ENCODE measurements at regions of chr10 and their contacts with region 1.

Region 1: DNA sequence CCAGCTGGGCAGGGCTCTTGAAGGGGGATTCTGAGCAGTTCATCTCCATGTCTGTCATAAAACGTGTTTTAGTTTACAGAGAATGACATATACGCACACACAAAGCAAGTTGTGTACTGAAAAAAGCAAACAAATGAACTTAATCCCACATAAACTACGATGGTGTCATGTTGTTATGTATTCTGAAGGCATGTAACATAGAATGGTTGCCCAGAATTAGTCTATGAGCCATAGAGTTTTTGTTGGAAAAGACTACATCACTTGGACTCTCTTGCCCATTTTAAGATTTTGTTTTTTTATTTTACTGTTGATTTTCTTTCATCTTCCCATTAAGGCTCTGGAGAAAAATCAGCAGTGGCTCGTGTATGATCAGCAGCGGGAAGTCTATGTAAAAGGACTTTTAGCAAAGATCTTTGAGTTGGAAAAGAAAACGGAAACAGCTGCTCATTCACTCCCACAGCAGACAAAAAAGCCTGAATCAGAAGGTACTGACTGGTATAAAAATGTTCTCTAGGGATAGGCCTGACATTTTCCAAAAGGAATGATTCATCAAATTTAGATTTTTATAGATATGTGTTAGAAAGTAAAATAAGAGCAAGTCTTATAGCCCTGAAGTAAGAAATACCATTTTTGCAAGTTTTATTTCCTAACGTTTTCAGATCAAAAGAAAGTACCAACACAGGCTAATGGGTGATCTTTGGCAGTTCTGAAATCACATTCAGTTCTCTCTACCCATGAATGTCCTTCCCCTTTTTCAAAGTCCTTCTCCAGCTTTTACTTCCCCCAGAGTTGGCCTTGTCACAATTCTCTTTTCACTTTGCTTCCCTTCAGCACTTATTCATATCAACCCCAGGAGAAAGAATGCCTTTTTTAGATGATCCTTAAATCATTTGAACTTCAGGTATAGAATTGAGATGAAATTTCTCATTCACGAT is 18.9 kb downstream of the CEP55 start:
- DNase-seq: no peak
- ATAC-seq: no peak
- H3K4me3 ChIP-seq: no peak overlapping the region
- H3K27ac ChIP-seq: no peak overlapping the region
- H3K4me1 ChIP-seq: peaks cover 6% of the 10 kb centered on the region; the same call in 1 of the 2 replicates
- H3K27me3 ChIP-seq: no peaks in the 10 kb centered on the region
- CTCF ChIP-seq: no peak

Region 2: GRCh38 chr10:92965314-92965713 is 550.0 kb before region 1 on chr10:
- CTCF ChIA-PET with region 1: no interaction called
- POLR2A ChIA-PET with region 1: interaction called, 18 read pairs
- intact Hi-C with region 1: no loop called
- DNase-seq: peak; percentile 68
- ATAC-seq: 0 out of 2 replicates have a peak, but pooled peaks have one; percentile 27
- H3K4me3 ChIP-seq: peak overlapping the region; percentile 31; the same call in 1 of the 2 replicates
- H3K27ac ChIP-seq: no peak overlapping the region
- H3K4me1 ChIP-seq: peaks cover 11% of the 10 kb centered on the region
- H3K27me3 ChIP-seq: no peaks in the 10 kb centered on the region
- CTCF ChIP-seq: peak; percentile 77

Region 3: DNA sequence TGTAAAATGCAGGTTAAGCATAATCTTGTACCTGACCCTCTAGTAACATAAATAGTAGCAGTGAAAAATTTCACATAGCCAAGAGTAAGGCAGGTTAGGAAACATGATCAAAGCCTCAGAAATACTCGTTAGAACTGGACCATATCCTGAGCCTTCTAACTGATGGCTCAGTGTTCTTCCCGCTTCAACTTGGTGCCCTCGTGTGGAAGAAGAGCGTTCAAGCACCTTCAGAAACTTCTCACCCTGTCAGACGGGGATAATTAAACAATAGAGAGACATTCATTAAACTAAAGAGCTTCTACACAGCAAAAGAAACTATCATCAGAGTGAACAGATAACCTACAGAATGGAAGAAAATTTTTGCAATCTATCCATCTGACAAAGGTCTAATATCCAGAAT is 157.7 kb before region 1 on chr10:
- CTCF ChIA-PET with region 1: interaction called, 12 read pairs
- POLR2A ChIA-PET with region 1: no interaction called
- intact Hi-C with region 1: no loop called
- DNase-seq: peak; percentile 34
- ATAC-seq: peak; percentile 54; the same call in 1 of the 2 replicates
- H3K4me3 ChIP-seq: no peak overlapping the region
- H3K27ac ChIP-seq: no peak overlapping the region
- H3K4me1 ChIP-seq: no peaks in the 10 kb centered on the region
- H3K27me3 ChIP-seq: no peaks in the 10 kb centered on the region
- CTCF ChIP-seq: peak; percentile 52

Region 4: GRCh38 chr10:93420091-93420490 is 95.2 kb before region 1 on chr10:
- CTCF ChIA-PET with region 1: no interaction called
- POLR2A ChIA-PET with region 1: no interaction called
- intact Hi-C with region 1: no loop called
- DNase-seq: no peak
- ATAC-seq: no peak
- H3K4me3 ChIP-seq: no peak overlapping the region
- H3K27ac ChIP-seq: no peak overlapping the region
- H3K4me1 ChIP-seq: no peaks in the 10 kb centered on the region
- H3K27me3 ChIP-seq: no peaks in the 10 kb centered on the region
- CTCF ChIP-seq: no peak

Region 5: DNA sequence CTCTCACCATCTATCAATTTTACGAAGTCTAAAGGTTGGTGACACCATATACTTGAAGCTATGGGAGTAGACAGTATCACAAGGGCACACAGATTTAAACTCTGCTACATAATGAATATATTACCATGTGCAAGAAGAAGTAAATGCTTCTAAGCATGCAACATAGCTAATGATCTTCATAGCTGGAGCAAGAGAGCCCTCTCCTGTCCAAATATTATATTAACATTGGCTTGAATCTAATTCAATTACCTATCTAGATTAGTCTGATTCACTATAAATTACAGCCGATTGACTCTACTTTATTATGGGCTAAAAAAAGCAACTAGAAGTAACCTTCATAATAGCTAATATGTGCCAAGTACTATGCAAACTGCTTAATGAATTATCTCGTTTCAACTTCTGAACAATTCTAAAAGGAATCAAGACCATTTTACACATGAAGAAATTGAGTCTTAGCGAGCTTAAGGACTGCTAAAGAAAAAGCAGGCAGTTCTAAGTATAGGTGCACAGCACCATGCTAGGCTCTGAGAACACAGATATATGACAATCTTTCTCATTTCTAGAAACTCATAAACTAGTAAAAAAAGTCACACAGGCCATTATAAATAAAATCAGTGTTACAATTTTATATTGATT is 165.2 kb after region 1 on chr10:
- CTCF ChIA-PET with region 1: interaction called, 3 read pairs
- POLR2A ChIA-PET with region 1: no interaction called
- intact Hi-C with region 1: loop called (anchors 1 kb)
- DNase-seq: peak; percentile 78
- ATAC-seq: peak; percentile 69
- H3K4me3 ChIP-seq: no peak overlapping the region
- H3K27ac ChIP-seq: no peak overlapping the region
- H3K4me1 ChIP-seq: no peaks in the 10 kb centered on the region
- H3K27me3 ChIP-seq: no peaks in the 10 kb centered on the region
- CTCF ChIP-seq: peak; percentile 69

Measured in PC-3 (cell line).